Cardiac septum (tissue), 1 donor: ENCODE measurements at regions of chr12 and their contacts with region 1.

Region 1: GRCh38 chr12:108691175-108691997 is 39.9 kb downstream of the CORO1C start:
- DNase-seq: peak; percentile 96

Region 2: GRCh38 chr12:108664338-108665258 is 26.8 kb before region 1 on chr12:
- intact Hi-C with region 1: loop called (anchors 2 kb)
- DNase-seq: peak; percentile 92

Region 3: GRCh38 chr12:108788076-108788782 is 96.8 kb after region 1 on chr12:
- intact Hi-C with region 1: loop called (anchors 5 kb)
- DNase-seq: no peak